ENCODE measurements at regions of chrX and their contacts with region 1.

Region 1: GRCh38 chrX:33434256-33435092 is 223.1 kb upstream of the DMD start:
- DNase-seq: peak in 8 of 10 donors; percentile 21 to 90 (median 56)

Region 2: DNA sequence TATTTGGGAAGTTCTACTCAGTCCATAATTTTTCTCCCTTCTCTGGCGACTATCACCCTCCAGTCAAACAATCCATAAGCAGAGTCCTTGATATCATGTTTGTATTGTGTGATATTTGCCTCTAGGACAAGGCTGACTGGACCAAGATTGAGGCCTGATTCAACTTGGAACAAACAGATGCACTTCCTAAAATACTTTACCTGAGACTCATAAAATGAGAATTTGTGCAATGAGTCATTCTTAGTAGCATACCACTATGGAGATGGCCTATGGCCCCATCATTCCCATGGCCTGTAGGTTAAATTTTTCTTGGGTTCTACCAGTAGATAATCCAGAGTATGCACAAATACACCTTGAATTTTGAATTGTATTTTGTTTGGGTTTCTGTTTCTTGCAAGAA is 148.9 kb before region 1 on chrX:
- intact Hi-C with region 1: no loop called
- DNase-seq: no peak

Region 3: DNA sequence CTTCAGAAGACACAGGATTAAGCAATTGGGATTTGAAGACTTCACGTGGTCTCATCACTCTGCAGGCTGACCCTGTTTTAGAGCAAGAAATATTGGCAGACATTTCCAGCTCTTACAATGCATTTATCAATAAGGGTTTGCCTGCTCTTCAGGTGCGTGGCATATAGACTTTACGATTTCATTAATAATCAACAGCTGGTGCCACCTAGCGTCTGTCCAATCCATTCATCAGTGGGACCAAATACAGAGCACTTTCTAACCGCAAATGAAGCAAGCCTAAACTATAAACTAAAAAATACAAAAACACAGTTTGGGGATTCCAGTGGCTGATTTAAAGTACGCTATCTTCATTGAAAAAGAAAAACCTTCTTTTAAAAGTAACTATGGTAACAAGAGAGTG is 97.7 kb before region 1 on chrX:
- intact Hi-C with region 1: no loop called
- DNase-seq: peak in 2 of 10 donors; percentile 12 to 29

Region 4: DNA sequence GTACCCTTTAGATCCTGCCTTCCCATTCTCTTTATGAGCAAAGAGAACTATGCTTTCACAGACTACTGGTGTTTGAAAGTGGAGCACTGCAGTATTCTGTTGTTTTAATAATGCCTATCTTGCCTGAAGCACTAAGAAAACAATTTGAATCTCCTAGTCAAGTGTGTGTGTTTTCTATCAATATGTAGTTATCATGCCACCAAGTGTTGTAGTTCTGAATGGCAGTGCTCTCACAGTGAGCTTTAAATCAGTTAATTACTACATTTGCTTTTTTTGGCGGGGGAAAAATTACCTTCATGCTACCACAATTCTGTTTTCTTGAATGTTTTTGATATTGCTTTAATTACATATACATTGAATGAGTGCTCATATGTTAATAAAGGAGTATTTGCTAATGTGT is 841.2 kb after region 1 on chrX:
- intact Hi-C with region 1: loop called (anchors 10 kb)
- DNase-seq: no peak

Region 5: DNA sequence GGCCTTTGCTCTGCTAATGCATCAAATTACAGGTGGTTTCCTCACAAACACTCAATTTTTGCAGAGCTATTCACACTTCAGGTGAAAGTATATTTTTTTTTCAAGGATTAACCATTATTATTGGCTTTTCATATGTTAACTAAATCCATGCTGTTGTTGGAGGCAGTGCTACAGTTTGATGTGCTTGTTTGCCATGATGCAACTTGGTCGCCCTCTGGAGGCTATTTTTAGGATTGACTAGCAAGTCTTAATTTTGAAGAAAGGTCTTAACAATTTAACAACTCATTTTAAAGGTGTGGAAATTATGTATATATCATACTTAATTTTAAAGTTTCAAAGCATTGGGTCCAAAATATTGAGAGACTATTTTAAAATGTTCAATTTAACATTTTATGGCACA is 866.4 kb after region 1 on chrX:
- intact Hi-C with region 1: loop called (anchors 10 kb)
- DNase-seq: peak in 2 of 10 donors; percentile 7 to 10